ENCODE measurements at regions of chr3 and their contacts with region 1.

Region 1: GRCh38 chr3:185770109-185770508 is 54.7 kb downstream of the IGF2BP2 start:
- DNase-seq: no peak
- H3K4me3 Mint-ChIP-seq: no peak overlapping the region
- H3K27ac Mint-ChIP-seq: no peak overlapping the region
- H3K4me1 Mint-ChIP-seq: peaks cover 2% of the 10 kb centered on the region
- H3K27me3 Mint-ChIP-seq: peaks cover 7% of the 10 kb centered on the region

Region 2: DNA sequence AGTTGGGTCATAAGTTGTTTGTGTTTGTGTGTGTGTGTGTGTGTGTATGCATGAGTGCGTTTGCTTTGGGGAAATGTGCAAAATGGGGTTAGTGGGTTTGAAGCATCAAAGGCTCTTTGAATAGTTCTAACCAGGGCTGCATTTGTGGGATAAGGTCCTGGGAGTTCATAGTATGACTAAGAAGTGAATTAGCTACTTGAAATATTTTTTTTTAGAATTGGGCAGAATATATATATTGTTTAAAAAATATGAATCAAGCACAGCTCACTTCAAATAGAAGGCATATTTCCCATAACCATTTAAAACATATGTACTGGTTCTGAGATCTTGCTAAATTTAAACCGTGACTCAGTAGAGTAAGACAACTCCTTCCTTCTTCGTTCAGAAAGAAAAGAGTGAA is 11.7 kb after region 1 on chr3:
- CTCF ChIA-PET with region 1: interaction called, 39 read pairs
- POLR2A ChIA-PET with region 1: no interaction called
- intact Hi-C with region 1: no loop called
- DNase-seq: no peak
- H3K4me3 Mint-ChIP-seq: no peak overlapping the region
- H3K27ac Mint-ChIP-seq: no peak overlapping the region
- H3K4me1 Mint-ChIP-seq: no peaks in the 10 kb centered on the region
- H3K27me3 Mint-ChIP-seq: peaks cover 12% of the 10 kb centered on the region